Mucosa of descending colon (tissue), 3 donors: ENCODE measurements at regions of chr2 and their contacts with region 1.

Region 1: DNA sequence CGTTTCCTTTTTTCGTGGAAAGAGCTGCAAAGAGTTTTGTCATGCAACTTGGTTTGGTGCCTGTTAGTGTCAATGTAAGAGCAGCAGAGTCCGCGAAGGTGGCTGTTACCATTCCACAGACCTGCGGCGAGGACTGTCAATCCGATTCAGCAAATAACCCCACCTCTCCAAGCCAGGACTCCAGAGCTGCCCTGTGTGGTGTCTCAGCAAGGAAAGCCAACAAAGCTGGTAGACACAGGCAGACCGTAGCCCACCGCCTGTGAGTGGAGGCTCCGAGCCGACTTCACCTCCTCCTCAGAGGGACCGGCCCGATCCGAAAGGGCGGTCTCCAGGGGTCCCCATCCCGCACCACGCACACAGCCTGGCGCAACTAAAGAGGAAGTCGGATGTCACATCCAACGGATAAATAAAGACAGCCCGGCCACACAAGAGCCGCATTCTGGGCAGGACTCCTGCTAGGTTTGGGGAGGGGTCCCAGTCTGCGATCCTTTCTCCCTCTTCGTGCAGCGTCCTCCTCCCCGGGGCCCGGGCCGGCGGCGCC is 819 bp downstream of the ANKRD44 start:
- DNase-seq: peak; percentile 52 to 72 (median 60)
- ATAC-seq: peak; percentile 15
- H3K4me3 ChIP-seq: peak overlapping the region; percentile 40
- H3K4me1 ChIP-seq: peaks cover 6% of the 10 kb centered on the region
- CTCF ChIP-seq: no peak

Region 2: DNA sequence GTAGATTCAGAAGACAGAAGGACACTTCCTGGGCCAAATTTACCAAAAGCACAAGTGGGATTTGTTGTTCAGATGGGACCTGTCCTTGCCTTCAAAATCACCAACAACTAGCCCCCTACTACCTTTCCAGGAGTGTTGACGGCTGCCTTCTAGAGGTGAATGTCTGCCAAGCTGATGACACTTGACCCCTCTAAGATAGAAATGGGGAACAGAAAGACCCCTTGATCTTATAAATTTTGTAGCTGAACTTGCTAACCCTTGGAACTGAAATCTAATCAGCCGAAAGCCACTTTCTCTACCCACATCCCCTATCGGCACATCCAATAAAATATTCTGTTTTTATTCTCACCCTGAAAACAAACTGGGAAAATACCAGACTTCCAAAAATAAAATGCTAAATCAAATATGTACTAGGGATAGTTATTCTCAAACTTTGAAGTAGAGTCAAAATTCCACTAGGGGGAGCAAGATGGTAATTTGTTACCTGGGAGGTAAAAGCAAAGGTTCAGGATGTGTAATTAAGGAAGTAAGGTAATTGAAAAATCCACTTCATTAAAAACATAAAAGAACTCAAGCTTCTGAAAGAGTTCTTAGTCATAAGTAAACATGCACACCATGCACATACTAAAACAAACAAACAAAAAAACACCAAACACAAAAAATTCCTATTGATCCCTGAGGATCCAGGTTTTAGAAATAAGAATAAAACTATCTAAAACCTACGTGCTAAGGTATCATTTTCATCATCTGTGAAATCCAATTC is 118.4 kb before region 1 on chr2:
- intact Hi-C with region 1: loop called (anchors 5 kb)
- DNase-seq: no peak
- ATAC-seq: peak; percentile 76
- H3K4me3 ChIP-seq: no peak overlapping the region
- H3K4me1 ChIP-seq: peaks cover 2% of the 10 kb centered on the region
- CTCF ChIP-seq: peak; percentile 40

Region 3: GRCh38 chr2:197198890-197199289 is 110.9 kb before region 1 on chr2:
- intact Hi-C with region 1: loop called (anchors 5 kb)
- DNase-seq: peak; percentile 57 to 84 (median 73)
- ATAC-seq: peak; percentile 90
- H3K4me3 ChIP-seq: no peak overlapping the region
- H3K4me1 ChIP-seq: no peaks in the 10 kb centered on the region
- CTCF ChIP-seq: no peak

Region 4: GRCh38 chr2:197499594-197500526 is 190.1 kb after region 1 on chr2 and contains the starts of genes HSPD1 and HSPE1:
- intact Hi-C with region 1: no loop called
- DNase-seq: peak; percentile 98 to 100 (median 99)
- ATAC-seq: peak; percentile 94
- H3K4me3 ChIP-seq: peak within 1 kb of the TSS; percentile 88
- H3K4me1 ChIP-seq: peaks cover 44% of the 10 kb centered on the region
- CTCF ChIP-seq: no peak
- total RNA-seq, gene HSPD1: 162 to 219 (median 172) TPM
- total RNA-seq, gene HSPE1: 79.0 to 106 (median 84.8) TPM